Activated CD4-positive, alpha-beta T cell treated with anti-CD3 and anti-CD28 coated beads, Interleukin-2, amount 10 ng/mL, durations not matched to agents 24 days and 14 days (primary cell): ENCODE measurements at regions of chr19 and their contacts with region 1.

Region 1: GRCh38 chr19:58326914-58327726 is at the start of gene ZSCAN22:
- DNase-seq: peak; percentile 97
- H3K4me3 Mint-ChIP-seq: no peak within 1 kb of the TSS
- H3K27ac Mint-ChIP-seq: no peak within 1 kb of the TSS
- H3K4me1 Mint-ChIP-seq: peaks cover 5% of the 10 kb centered on the region
- H3K27me3 Mint-ChIP-seq: no peaks in the 10 kb centered on the region
- total RNA-seq, gene ZSCAN22: 4.2 and 4.6 TPM in 2 replicates

Region 2: GRCh38 chr19:58278157-58279041 is 48.7 kb before region 1 on chr19 and contains the start of gene ZNF8:
- intact Hi-C with region 1: loop called (anchors 1 kb)
- DNase-seq: peak; percentile 99
- H3K4me3 Mint-ChIP-seq: peak within 1 kb of the TSS; percentile 99
- H3K27ac Mint-ChIP-seq: peak within 1 kb of the TSS; percentile 97
- H3K4me1 Mint-ChIP-seq: peaks cover 26% of the 10 kb centered on the region
- H3K27me3 Mint-ChIP-seq: no peaks in the 10 kb centered on the region
- total RNA-seq, gene ZNF8: 4.8 and 5.1 TPM in 2 replicates

Region 3: GRCh38 chr19:58362272-58362994 is 35.3 kb after region 1 on chr19 and contains the start of gene ZNF497:
- intact Hi-C with region 1: loop called (anchors 1 kb)
- DNase-seq: peak; percentile 99
- H3K4me3 Mint-ChIP-seq: peak within 1 kb of the TSS; percentile 95
- H3K27ac Mint-ChIP-seq: peak within 1 kb of the TSS; percentile 97
- H3K4me1 Mint-ChIP-seq: peaks cover 9% of the 10 kb centered on the region
- H3K27me3 Mint-ChIP-seq: no peaks in the 10 kb centered on the region
- total RNA-seq, gene ZNF497: 0.79 and 1.1 TPM in 2 replicates

Region 4: DNA sequence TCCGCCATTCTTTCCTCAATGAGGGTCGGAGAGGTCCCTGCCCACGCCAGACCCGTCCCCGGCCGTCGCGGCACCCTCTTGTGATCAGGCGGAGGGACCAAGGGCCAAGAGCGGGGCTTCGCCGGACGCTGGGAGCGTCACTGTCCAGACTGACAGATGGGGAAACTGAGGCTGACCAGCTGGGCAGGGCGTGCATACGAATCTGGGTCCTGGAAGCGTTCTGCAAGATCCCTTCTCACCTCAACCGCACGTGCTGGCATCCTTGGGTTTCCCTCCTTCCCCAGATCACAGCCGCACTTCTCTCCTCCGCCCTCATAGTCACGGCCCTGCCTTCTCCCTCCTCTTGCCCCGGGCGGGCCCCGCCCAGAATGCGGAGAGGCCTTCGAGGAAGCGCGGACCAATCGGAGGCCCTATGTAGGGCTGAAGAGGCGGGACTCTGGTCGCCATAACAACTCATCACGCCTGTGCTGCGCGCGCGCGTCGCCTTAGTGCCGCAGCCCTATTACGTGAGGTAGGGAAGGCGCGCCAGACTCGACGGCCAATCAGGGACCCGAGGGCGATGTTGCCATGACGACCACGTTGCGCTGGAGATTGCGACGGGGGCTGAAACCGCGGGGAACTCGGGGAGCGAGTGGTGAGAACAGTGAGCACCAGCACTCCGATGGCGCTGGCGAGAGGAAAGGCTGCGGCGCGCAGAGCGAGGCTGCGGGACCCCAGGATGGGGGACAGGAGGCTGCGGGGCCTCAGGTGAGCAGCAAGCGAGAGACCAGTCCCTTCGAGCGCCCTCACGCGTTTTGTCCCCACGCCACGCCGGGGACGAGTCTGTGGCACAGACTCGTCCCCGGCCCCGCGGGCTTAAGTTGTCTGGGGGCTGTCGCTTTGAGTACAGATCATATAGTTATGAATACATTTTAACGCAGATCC is 74.1 kb after region 1 on chr19:
- intact Hi-C with region 1: loop called (anchors 1 kb)
- DNase-seq: peak; percentile 100
- H3K4me3 Mint-ChIP-seq: peak overlapping the region; percentile 91
- H3K27ac Mint-ChIP-seq: peak overlapping the region; percentile 90
- H3K4me1 Mint-ChIP-seq: peaks cover 10% of the 10 kb centered on the region
- H3K27me3 Mint-ChIP-seq: peaks cover 7% of the 10 kb centered on the region

Region 5: GRCh38 chr19:58429745-58430144 is 102.6 kb after region 1 on chr19:
- intact Hi-C with region 1: no loop called
- DNase-seq: no peak
- H3K4me3 Mint-ChIP-seq: no peak overlapping the region
- H3K27ac Mint-ChIP-seq: no peak overlapping the region
- H3K4me1 Mint-ChIP-seq: no peaks in the 10 kb centered on the region
- H3K27me3 Mint-ChIP-seq: no peaks in the 10 kb centered on the region

Region 6: GRCh38 chr19:58439576-58440554 is 112.7 kb after region 1 on chr19 and contains the start of gene ZNF132:
- intact Hi-C with region 1: loop called (anchors 1 kb)
- DNase-seq: peak; percentile 98
- H3K4me3 Mint-ChIP-seq: peak within 1 kb of the TSS; percentile 97
- H3K27ac Mint-ChIP-seq: peak within 1 kb of the TSS; percentile 97
- H3K4me1 Mint-ChIP-seq: peaks cover 21% of the 10 kb centered on the region
- H3K27me3 Mint-ChIP-seq: no peaks in the 10 kb centered on the region
- total RNA-seq, gene ZNF132: 3.6 and 3.8 TPM in 2 replicates